ENCODE measurements at regions of chr6 and their contacts with region 1.

Region 1: GRCh38 chr6:28355743-28356665 is 6.3 kb downstream of the ZKSCAN3 start:
- DNase-seq: peak; percentile 63 to 90
- ATAC-seq: peak; percentile 85 to 93 (median 90)
- H3K4me3 ChIP-seq: peak overlapping the region; percentile 50 to 90 (median 65)
- H3K27ac ChIP-seq: peak overlapping the region; percentile 68 to 94 (median 84)
- H3K4me1 ChIP-seq: peaks cover 9 to 36% (median 30%) of the 10 kb centered on the region in 9 donors
- H3K27me3 ChIP-seq: no peaks in the 10 kb centered on the region
- CTCF ChIP-seq: peak; percentile 66 to 84 (median 79)

Region 2: DNA sequence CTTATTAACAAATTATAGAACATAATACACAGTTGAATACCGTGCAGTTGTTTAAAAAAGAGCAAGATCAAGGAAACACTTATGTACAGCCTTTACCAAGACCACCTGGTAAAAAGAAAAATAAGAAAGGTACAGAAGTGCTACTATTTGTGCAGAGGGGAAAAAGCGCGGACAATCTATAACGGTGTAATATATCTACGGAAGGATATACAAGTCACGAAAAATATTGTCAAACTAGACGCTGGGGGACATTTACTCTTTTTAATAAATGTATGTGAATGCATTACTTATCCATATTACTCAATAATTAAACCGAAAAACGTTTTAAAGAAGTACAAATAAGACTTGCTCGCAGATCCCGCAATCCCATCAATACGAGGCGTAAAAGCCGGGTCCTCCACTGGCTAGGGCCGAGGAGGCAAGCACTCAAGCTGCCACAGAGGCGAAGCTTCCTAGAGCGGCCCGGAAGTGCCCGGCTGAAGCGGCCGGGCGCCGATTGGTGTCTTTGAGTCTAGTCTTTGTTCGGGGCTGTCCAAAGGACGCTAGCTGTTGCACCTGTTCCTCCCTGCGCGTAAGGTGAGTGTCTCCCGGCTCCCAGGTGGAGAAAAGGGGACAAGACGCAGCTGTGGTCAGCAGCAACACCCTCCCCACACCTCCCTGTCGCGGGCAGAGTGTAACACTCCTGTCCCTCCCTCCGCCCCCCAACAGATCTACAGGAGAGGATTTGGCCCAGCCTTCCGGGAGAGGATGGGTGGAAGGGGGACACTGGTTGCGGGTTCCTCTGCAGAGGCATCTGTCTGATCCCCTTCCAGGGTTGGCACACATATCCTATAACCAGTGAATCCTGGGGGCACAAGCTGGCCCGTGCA is 231.7 kb before region 1 on chr6 and contains the start of gene ZSCAN16:
- intact Hi-C with region 1: loop called in 1 of 10 experiments (anchors 10 kb)
- DNase-seq: peak; percentile 84 to 87
- ATAC-seq: peak; percentile 94 to 100 (median 99)
- H3K4me3 ChIP-seq: peak within 1 kb of the TSS; percentile 50 to 75 (median 68)
- H3K27ac ChIP-seq: peak within 1 kb of the TSS in 9 of 10 donors; percentile 49 to 88 (median 62)
- H3K4me1 ChIP-seq: peaks cover 0 to 38% (median 20%) of the 10 kb centered on the region in 9 donors
- H3K27me3 ChIP-seq: no peaks in the 10 kb centered on the region
- CTCF ChIP-seq: no peak
- total RNA-seq, gene ZSCAN16: 1.4 to 3.3 (median 1.8) TPM

Region 3: GRCh38 chr6:28218271-28219248 is 137.4 kb before region 1 on chr6:
- intact Hi-C with region 1: loop called in 4 of 10 experiments (anchors 1 to 10 kb)
- DNase-seq: peak; percentile 85
- ATAC-seq: peak; percentile 94 to 97 (median 96)
- H3K4me3 ChIP-seq: peak overlapping the region; percentile 38 to 73 (median 63)
- H3K27ac ChIP-seq: peak overlapping the region in 9 of 10 donors; percentile 75 to 90 (median 80)
- H3K4me1 ChIP-seq: peaks cover 2 to 16% (median 13%) of the 10 kb centered on the region in 9 donors
- H3K27me3 ChIP-seq: peaks cover 0 to 76% (median 51%) of the 10 kb centered on the region in 7 donors
- CTCF ChIP-seq: no peak

Region 4: DNA sequence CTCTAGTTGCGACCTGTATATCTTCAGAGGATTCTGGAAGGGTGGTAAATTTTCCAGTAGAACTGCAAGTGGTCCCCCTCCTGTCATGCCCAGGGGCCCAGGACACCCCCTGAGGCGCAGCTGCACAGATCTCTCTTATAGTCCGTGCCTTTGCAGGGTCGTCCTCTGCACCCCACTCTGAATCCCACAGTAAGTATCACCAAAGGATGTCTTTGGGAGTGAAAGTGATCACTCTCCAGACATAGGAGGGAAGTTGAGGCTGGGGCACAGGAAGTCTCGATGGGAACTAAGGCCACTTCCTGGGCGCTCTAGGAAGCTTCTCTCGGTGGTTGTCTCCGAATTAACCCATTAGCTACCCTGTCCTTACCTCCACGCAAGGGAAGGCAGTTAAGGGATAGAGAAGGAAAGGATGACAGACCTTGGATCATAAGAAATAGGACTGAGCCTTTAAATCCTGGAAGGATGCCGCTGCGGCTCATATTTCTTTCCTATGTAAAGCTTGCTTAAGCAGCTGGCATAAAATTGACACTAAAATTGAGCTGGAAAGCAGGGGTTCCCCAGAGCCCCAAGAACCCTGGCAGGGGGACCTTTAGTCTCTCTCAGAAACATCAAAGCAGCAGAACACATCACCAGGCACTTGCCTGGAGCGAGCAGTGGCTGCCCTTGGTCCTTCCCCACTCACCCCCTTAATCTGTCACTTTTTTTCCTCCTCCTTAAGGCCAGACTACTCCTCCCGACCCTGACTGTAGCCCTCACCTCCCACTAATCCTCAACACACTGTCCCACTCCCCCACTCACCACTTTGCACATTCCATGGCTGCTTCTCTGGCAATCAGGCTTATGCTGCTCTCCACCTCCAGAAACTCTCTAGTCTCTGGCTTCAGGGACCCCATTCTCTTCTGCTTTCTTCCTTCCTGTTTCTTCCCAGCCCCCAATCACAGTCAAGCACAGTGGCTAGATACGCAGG is 103.7 kb before region 1 on chr6 and contains the start of gene ZKSCAN4:
- intact Hi-C with region 1: loop called in 1 of 10 experiments (anchors 10 kb)
- DNase-seq: peak; percentile 46 to 94
- ATAC-seq: peak; percentile 95 to 99 (median 98)
- H3K4me3 ChIP-seq: peak within 1 kb of the TSS; percentile 59 to 98 (median 89)
- H3K27ac ChIP-seq: peak within 1 kb of the TSS in 9 of 10 donors; percentile 28 to 87 (median 68)
- H3K4me1 ChIP-seq: peaks cover 9 to 36% (median 22%) of the 10 kb centered on the region in 9 donors
- H3K27me3 ChIP-seq: no peaks in the 10 kb centered on the region
- CTCF ChIP-seq: no peak
- total RNA-seq, gene ZKSCAN4: 0.55 to 3.6 (median 2.9) TPM

Region 5: GRCh38 chr6:28281288-28282064 is 74.5 kb before region 1 on chr6 and contains the start of gene PGBD1:
- intact Hi-C with region 1: loop called in 1 of 10 experiments (anchors 2 kb)
- DNase-seq: peak; percentile 72 to 85
- ATAC-seq: peak; percentile 92 to 98 (median 96)
- H3K4me3 ChIP-seq: peak within 1 kb of the TSS; percentile 47 to 88 (median 76)
- H3K27ac ChIP-seq: peak within 1 kb of the TSS in 8 of 10 donors; percentile 34 to 77 (median 60)
- H3K4me1 ChIP-seq: peaks cover 0 to 16% (median 11%) of the 10 kb centered on the region in 9 donors
- H3K27me3 ChIP-seq: peaks cover 0 to 6% (median 0%) of the 10 kb centered on the region in 7 donors
- CTCF ChIP-seq: peak in 2 of 9 donors; percentile 2 to 14
- total RNA-seq, gene PGBD1: 1.6 to 3.6 (median 2.7) TPM

Measured in heart right ventricle (tissue), 16 donors.